K562 (cell line): ENCODE measurements at regions of chr3 and their contacts with region 1.

Region 1: GRCh38 chr3:100400780-100401673 is at the starts of genes LNP1 and TOMM70:
- DNase-seq: peak; percentile 75 to 96 (median 82)
- ATAC-seq: peak; percentile 88
- H3K4me3 ChIP-seq: peak within 1 kb of the TSS; percentile 97
- H3K27ac ChIP-seq: peak within 1 kb of the TSS; percentile 98
- H3K4me1 ChIP-seq: peaks cover 0 to 3% of the 10 kb centered on the region in 2 experiments; a peak in 3 of 5 replicates
- H3K27me3 ChIP-seq: no peaks in the 10 kb centered on the region
- CTCF ChIP-seq: no peak
- EP300 ChIP-seq: no peak; the same call in 1 of the 2 replicates
- POLR2A ChIP-seq: peak; percentile 94
- RAD21 ChIP-seq: no peak
- polyA plus RNA-seq, gene LNP1: 1.9 to 4.9 TPM
- polyA plus RNA-seq, gene TOMM70: 17.5 to 22.3 TPM

Region 2: GRCh38 chr3:100196896-100197871 is 203.8 kb before region 1 on chr3:
- CTCF ChIA-PET with region 1: no interaction called
- POLR2A ChIA-PET with region 1: no interaction called
- in situ Hi-C with region 1: no loop called
- intact Hi-C with region 1: no loop called
- DNase-seq: no peak
- ATAC-seq: no peak
- H3K4me3 ChIP-seq: no peak overlapping the region
- H3K27ac ChIP-seq: no peak overlapping the region
- H3K4me1 ChIP-seq: no peaks in the 10 kb centered on the region; a peak in 1 of 5 replicates
- H3K27me3 ChIP-seq: no peaks in the 10 kb centered on the region
- CTCF ChIP-seq: no peak
- EP300 ChIP-seq: no peak
- POLR2A ChIP-seq: no peak
- RAD21 ChIP-seq: no peak

Region 3: GRCh38 chr3:100260685-100261484 is 140.1 kb before region 1 on chr3 and contains the start of gene TBC1D23:
- CTCF ChIA-PET with region 1: no interaction called
- POLR2A ChIA-PET with region 1: interaction called, 5 read pairs
- in situ Hi-C with region 1: no loop called
- intact Hi-C with region 1: loop called (anchors 5 kb)
- DNase-seq: peak; percentile 84 to 98 (median 88)
- ATAC-seq: peak; percentile 90
- H3K4me3 ChIP-seq: peak within 1 kb of the TSS; percentile 95
- H3K27ac ChIP-seq: peak within 1 kb of the TSS; percentile 98
- H3K4me1 ChIP-seq: peaks cover 6 to 11% of the 10 kb centered on the region in 2 experiments
- H3K27me3 ChIP-seq: no peaks in the 10 kb centered on the region
- CTCF ChIP-seq: no peak
- EP300 ChIP-seq: no peak
- POLR2A ChIP-seq: peak; percentile 80
- RAD21 ChIP-seq: no peak
- polyA plus RNA-seq, gene TBC1D23: 43.7 to 49.3 TPM

Region 4: DNA sequence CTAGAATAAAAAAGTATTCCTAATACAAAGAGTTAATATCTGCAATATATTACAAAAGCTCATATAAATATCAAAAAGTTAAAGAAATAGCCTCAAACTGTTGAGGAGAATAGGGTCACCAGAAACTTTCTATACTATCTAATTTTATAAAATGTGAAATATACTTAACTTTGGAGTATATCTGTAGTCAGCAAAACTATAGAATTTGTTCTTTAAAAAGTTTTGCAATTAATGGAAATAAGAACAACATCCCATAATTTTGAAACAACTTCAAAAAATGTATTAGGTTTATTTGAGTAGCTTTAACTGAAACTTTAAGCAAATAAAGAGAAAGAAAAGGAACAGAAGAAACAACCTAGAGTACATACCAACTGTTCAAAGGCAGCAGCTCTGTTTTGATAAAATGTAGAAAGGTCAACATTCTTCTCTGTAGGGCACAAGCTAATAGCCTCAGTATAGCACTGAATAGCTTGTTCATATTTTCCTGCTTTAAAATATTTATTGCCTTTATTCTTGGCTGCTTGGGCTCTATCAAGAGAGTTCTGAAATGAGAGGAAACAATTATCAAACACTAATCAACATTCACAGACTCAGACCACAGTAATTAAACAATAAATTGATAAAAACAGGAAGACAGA is 14.5 kb before region 1 on chr3:
- CTCF ChIA-PET with region 1: no interaction called
- POLR2A ChIA-PET with region 1: interaction called, 18 read pairs
- in situ Hi-C with region 1: no loop called
- intact Hi-C with region 1: no loop called
- DNase-seq: no peak
- ATAC-seq: no peak
- H3K4me3 ChIP-seq: no peak overlapping the region
- H3K27ac ChIP-seq: no peak overlapping the region
- H3K4me1 ChIP-seq: no peaks in the 10 kb centered on the region
- H3K27me3 ChIP-seq: no peaks in the 10 kb centered on the region
- CTCF ChIP-seq: no peak
- EP300 ChIP-seq: no peak
- POLR2A ChIP-seq: no peak
- RAD21 ChIP-seq: no peak

Region 5: GRCh38 chr3:100411091-100411982 is 10.3 kb after region 1 on chr3:
- CTCF ChIA-PET with region 1: no interaction called
- POLR2A ChIA-PET with region 1: interaction called, 11 read pairs
- in situ Hi-C with region 1: no loop called
- intact Hi-C with region 1: no loop called
- DNase-seq: no peak
- ATAC-seq: no peak
- H3K4me3 ChIP-seq: no peak overlapping the region
- H3K27ac ChIP-seq: no peak overlapping the region
- H3K4me1 ChIP-seq: no peaks in the 10 kb centered on the region
- H3K27me3 ChIP-seq: no peaks in the 10 kb centered on the region
- CTCF ChIP-seq: no peak
- EP300 ChIP-seq: no peak
- POLR2A ChIP-seq: no peak
- RAD21 ChIP-seq: no peak

Region 6: GRCh38 chr3:100454677-100455076 is 53.6 kb after region 1 on chr3:
- CTCF ChIA-PET with region 1: no interaction called
- POLR2A ChIA-PET with region 1: no interaction called
- in situ Hi-C with region 1: no loop called
- intact Hi-C with region 1: loop called (anchors 5 kb)
- DNase-seq: peak in 3 of 4 experiments; percentile 15 to 30 (median 17)
- ATAC-seq: no peak
- H3K4me3 ChIP-seq: no peak overlapping the region
- H3K27ac ChIP-seq: no peak overlapping the region
- H3K4me1 ChIP-seq: no peaks in the 10 kb centered on the region
- H3K27me3 ChIP-seq: no peaks in the 10 kb centered on the region
- CTCF ChIP-seq: no peak
- EP300 ChIP-seq: no peak; the same call in 1 of the 2 replicates
- POLR2A ChIP-seq: no peak
- RAD21 ChIP-seq: no peak

Region 7: DNA sequence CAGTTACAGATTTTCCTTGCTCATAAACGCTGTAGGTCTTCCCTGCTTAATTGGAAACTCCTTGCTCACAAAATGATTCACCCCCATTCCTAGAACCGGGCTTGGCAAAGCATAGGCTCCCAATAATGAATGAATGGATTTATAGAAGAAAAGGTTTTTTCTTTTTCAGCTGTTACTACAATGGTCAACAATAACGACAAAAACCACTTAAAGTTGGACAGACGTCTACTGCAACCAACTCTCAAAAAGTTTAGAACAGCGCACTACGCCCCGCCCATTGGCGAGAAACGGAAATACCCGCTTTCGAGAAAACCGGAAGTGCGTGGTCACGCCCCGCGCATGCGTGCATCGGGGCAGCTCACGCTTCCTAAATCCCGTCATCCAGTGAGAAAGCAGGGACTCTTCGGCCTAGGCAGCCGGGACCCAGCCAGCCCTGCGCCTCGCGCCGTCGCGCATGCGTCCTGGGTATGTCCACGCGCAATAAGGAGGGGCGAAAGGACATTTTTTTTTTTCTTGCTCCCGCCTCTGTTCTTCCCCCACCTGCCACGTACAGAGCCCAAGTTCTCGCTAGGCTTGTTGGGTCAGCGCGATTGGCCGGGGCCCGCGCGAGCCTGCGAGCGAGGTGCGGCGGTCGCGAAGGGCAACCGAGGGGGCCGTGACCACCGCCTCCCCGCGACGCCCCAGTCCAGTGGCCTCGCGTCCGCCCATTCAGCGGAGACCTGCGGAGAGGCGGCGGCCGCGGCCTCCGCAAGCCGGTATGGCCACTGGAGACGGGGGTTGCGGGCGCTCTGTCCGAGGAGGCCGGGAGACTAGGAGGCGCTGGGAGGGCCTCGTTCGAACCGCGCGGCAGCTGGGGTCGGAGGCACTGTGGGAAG is 308.2 kb after region 1 on chr3 and contains the start of gene TFG:
- CTCF ChIA-PET with region 1: no interaction called
- POLR2A ChIA-PET with region 1: interaction called, 4 read pairs
- in situ Hi-C with region 1: no loop called
- intact Hi-C with region 1: loop called (anchors 10 kb)
- DNase-seq: peak; percentile 97 to 98 (median 98)
- ATAC-seq: peak; percentile 94
- H3K4me3 ChIP-seq: peak within 1 kb of the TSS; percentile 83
- H3K27ac ChIP-seq: peak within 1 kb of the TSS; percentile 92
- H3K4me1 ChIP-seq: peaks cover 4 to 19% of the 10 kb centered on the region in 2 experiments; a peak in 3 of 5 replicates
- H3K27me3 ChIP-seq: no peaks in the 10 kb centered on the region
- CTCF ChIP-seq: no peak
- EP300 ChIP-seq: 0 out of 2 replicates have a peak, but pooled peaks have one; percentile 7
- POLR2A ChIP-seq: peak; percentile 76
- RAD21 ChIP-seq: no peak
- polyA plus RNA-seq, gene TFG: 33.5 to 48.8 TPM

Region 8: DNA sequence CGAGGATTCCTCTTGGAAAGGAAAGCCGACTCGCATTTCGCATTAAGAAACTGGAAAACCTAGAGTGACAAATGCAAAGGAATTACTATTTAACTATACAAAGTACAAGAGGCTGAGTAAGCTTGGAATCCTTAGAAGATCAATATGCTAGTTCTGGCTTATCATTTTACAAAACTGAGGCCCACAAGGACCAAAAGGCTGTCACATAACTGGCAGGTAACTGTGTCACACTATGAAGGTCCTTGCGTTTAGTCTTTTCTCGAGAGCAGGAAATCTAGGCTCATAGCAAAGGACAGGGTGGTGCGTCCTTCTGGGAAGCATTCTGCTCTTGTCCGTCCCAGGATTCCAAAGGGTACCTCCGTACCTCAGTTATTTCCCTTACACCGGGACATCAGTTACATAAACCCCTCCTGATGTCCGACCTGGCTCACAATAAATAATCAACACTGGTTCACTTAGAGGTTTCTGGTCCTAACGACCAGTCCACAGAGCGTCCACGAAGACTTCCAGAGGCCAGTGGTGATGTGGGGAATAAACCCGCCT is 1284.9 kb after region 1 on chr3:
- CTCF ChIA-PET with region 1: no interaction called
- POLR2A ChIA-PET with region 1: no interaction called
- in situ Hi-C with region 1: no loop called
- intact Hi-C with region 1: loop called (anchors 10 kb)
- DNase-seq: peak in 1 of 4 experiments; percentile 10
- ATAC-seq: peak; percentile 5
- H3K4me3 ChIP-seq: peak overlapping the region; percentile 86
- H3K27ac ChIP-seq: peak overlapping the region; percentile 98
- H3K4me1 ChIP-seq: peaks cover 6 to 9% of the 10 kb centered on the region in 2 experiments; a peak in 3 of 5 replicates
- H3K27me3 ChIP-seq: no peaks in the 10 kb centered on the region
- CTCF ChIP-seq: no peak
- EP300 ChIP-seq: no peak
- POLR2A ChIP-seq: no peak
- RAD21 ChIP-seq: no peak